H1 (cell line): ENCODE measurements at regions of chr22 and their contacts with region 1.

Region 1: GRCh38 chr22:29079218-29079901 is 6.5 kb downstream of the KREMEN1 start:
- DNase-seq: no peak
- H3K4me3 ChIP-seq: no peak overlapping the region
- H3K27ac ChIP-seq: no peak overlapping the region
- H3K4me1 ChIP-seq: peaks cover 1 to 4% (median 3%) of the 10 kb centered on the region in 4 experiments; a peak in 4 of 7 replicates
- H3K27me3 ChIP-seq: peaks cover 3 to 11% (median 9%) of the 10 kb centered on the region in 4 experiments
- CTCF ChIP-seq: no peak
- EP300 ChIP-seq: no peak
- POLR2A ChIP-seq: no peak
- RAD21 ChIP-seq: no peak

Region 2: DNA sequence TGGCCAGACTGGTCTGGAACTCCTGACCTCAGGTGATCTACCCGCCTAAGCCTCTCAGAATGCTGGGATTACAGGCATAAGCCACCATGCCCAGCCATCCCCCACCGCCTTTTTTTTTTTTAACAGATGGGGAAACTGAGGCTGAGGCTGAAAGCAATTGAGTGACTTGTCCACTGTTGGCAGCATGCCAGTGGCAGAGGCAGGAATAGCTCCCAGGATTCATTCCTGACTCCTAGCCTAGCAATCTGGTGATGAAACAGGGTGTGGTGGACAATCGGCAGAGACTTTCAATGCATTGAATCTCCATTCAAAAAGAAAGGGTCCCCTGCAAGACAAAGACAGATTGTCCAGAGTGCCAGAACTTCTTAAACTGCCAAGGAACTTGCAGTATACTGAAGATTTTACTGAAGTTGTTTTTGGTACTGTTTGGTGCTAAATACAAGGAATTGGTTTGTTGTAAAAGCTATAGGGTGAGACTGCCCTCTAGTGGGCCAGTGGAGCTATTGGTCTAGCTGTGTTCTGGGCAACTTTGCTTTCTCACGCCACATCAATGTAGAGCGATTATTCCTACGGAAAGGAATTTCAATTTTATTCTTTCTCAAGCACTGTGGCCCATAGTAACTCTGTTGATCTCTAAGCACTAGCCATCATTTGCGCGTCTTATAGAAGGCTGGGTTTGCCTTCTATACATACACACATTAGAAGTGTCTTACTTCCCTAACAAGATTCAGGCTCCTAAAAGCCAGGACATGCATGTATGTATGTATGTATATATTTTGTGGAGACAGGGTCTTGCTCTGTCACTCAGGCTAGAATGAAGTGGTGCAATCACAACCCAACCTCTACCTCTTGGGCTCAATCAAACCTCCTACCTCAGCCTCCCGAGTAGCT is 38.7 kb before region 1 on chr22:
- CTCF ChIA-PET with region 1: no interaction called
- POLR2A ChIA-PET with region 1: no interaction called
- DNase-seq: no peak
- H3K4me3 ChIP-seq: no peak overlapping the region
- H3K27ac ChIP-seq: no peak overlapping the region
- H3K4me1 ChIP-seq: peaks cover 0 to 3% (median 0%) of the 10 kb centered on the region in 4 experiments; a peak in 3 of 7 replicates
- H3K27me3 ChIP-seq: no peaks in the 10 kb centered on the region
- CTCF ChIP-seq: peak; percentile 48 to 91 (median 88)
- EP300 ChIP-seq: no peak
- POLR2A ChIP-seq: no peak
- RAD21 ChIP-seq: peak; percentile 92 to 98

Region 3: GRCh38 chr22:29090039-29090438 is 10.7 kb after region 1 on chr22:
- CTCF ChIA-PET with region 1: interaction called, 10 read pairs
- POLR2A ChIA-PET with region 1: interaction called, 3 read pairs
- DNase-seq: no peak
- H3K4me3 ChIP-seq: no peak overlapping the region
- H3K27ac ChIP-seq: no peak overlapping the region
- H3K4me1 ChIP-seq: no peaks in the 10 kb centered on the region
- H3K27me3 ChIP-seq: no peaks in the 10 kb centered on the region
- CTCF ChIP-seq: no peak
- EP300 ChIP-seq: no peak
- POLR2A ChIP-seq: no peak
- RAD21 ChIP-seq: no peak